ENCODE measurements at regions of chr11 and their contacts with region 1.

Region 1: GRCh38 chr11:104095791-104096190 is 59.4 kb downstream of the DDI1 start:
- DNase-seq: no peak
- ATAC-seq: no peak

Region 2: DNA sequence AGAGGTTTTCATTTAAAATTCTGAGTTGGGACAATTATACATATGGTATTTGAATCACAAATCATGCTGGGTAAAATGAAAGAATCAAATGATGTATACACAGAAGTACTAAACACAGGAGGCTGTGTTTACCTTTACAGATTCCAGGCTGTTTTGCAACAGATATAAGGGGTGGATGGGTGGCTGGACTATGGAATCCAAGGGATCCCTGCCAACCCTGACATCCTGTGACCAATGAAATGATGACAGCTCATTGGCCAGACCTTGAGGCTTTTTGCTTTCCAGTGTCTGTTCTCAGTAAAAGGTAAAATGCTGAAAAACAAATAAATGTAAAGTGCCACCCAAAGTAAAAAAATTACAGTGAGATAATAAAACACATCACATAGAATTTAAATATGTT is 62.7 kb before region 1 on chr11:
- intact Hi-C with region 1: loop called (anchors 10 kb)
- DNase-seq: no peak
- ATAC-seq: peak; percentile 62